HAP-1 (cell line): ENCODE measurements at regions of chr18 and their contacts with region 1.

Region 1: GRCh38 chr18:31563778-31564177 is 27.9 kb upstream of the TTR start:
- DNase-seq: no peak
- H3K4me3 ChIP-seq: no peak overlapping the region
- H3K4me1 ChIP-seq: no peaks in the 10 kb centered on the region
- H3K27me3 ChIP-seq: no peaks in the 10 kb centered on the region

Region 2: GRCh38 chr18:31049189-31049588 is 514.6 kb before region 1 on chr18:
- in situ Hi-C with region 1: no loop called
- DNase-seq: no peak
- H3K4me3 ChIP-seq: no peak overlapping the region
- H3K4me1 ChIP-seq: no peaks in the 10 kb centered on the region
- H3K27me3 ChIP-seq: no peaks in the 10 kb centered on the region

Region 3: DNA sequence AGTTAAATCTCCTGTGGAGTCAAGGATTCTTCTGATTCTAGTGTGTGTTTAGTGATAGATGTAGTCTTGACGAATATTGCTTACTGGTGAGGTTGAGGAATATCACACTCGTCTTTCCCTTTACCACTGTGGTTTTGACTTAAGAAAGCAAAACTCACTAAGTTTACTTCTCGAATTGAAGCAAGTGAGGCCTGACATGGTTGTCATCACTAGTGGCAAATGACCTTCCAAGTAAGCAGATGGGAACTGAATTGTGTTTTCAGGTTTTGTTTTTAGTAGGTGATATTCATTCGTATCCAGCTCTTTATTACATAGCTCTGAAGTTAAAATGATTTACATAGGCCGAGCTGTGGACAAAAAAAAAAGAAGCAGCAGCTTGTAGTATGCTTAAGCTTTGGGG is 207.8 kb before region 1 on chr18:
- in situ Hi-C with region 1: no loop called
- DNase-seq: no peak
- H3K4me3 ChIP-seq: no peak overlapping the region
- H3K4me1 ChIP-seq: no peaks in the 10 kb centered on the region
- H3K27me3 ChIP-seq: no peaks in the 10 kb centered on the region

Region 4: GRCh38 chr18:31819925-31820229 is 256.1 kb after region 1 on chr18:
- in situ Hi-C with region 1: loop called (anchors 10 kb)
- DNase-seq: no peak
- H3K4me3 ChIP-seq: no peak overlapping the region
- H3K4me1 ChIP-seq: no peaks in the 10 kb centered on the region
- H3K27me3 ChIP-seq: no peaks in the 10 kb centered on the region